HEK293T (cell line): ENCODE measurements at regions of chr6 and their contacts with region 1.

Region 1: GRCh38 chr6:130885392-130886192 is 58.4 kb downstream of the SMLR1 start:
- DNase-seq: peak; percentile 75

Region 2: DNA sequence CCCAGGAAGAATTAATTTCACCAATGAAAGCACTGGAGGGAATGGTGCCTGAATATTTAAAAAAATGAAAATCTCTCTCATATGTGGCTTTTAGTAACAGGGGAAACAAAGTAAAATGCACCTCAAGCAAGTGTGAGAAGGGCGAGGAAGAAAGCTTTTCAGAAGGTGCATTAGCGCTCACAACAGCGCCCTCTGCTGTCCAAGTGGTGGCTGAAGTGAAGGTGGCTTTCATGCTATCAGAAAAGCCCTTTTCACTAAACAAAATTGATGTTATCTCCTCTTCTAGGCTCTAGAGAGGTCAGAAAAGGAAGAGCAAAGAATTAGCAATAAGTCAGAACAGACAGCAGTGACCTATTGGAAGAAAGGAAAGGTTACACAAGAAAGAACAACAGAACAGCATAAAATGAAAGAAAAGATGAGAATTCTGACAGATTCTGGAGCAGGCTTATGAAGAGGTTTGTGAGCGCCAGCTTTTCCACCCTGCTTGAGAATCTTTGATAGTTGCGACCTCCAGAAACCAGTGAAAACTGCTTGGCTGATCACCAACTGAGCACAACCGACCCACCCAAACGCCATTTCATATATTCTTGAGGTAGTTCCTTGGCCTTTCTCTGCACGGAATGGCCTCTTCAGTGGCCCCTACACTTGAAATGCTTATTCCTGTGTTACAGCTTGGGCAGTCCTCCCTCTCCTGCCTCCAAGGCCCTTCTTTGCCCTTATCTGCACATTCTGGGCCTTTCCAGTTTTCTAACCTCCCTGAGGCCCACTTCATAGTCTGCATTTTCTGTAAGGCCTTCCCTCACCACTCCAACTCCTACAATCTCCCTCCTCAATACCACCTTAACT is 13.1 kb before region 1 on chr6:
- CTCF ChIA-PET with region 1: interaction called, 10 read pairs
- POLR2A ChIA-PET with region 1: no interaction called
- DNase-seq: peak; percentile 76

Region 3: DNA sequence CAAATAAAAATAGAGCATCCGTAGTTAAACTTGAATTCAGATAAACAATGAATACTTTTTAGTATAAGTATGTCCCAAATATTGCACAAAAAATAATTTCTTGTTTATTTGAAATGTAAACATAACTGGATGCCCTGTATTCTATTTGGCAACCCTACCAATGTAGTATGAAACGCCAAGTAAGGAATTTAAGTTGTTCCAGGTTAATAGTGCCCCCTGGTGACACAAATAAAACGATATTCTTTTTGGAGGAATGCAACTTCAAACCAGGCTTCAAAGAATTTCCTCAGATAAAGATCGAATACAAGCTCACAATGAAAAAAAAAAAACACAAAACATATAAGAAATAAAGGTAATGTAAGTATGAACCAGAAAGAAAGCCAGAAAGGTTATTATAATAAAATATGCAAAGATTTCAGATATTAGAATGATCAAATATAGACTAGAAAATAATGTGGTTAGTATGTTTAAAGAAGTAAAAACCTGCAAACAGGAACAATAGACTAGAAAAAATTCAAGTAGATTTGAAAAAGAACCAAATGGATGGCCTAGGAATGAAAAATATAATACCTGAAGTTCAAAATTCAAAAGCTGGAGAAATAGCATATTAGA is 231.3 kb after region 1 on chr6:
- CTCF ChIA-PET with region 1: interaction called, 33 read pairs
- POLR2A ChIA-PET with region 1: no interaction called
- DNase-seq: peak; percentile 47